Colonic mucosa (tissue), 4 donors: ENCODE measurements at regions of chr17 and their contacts with region 1.

Region 1: DNA sequence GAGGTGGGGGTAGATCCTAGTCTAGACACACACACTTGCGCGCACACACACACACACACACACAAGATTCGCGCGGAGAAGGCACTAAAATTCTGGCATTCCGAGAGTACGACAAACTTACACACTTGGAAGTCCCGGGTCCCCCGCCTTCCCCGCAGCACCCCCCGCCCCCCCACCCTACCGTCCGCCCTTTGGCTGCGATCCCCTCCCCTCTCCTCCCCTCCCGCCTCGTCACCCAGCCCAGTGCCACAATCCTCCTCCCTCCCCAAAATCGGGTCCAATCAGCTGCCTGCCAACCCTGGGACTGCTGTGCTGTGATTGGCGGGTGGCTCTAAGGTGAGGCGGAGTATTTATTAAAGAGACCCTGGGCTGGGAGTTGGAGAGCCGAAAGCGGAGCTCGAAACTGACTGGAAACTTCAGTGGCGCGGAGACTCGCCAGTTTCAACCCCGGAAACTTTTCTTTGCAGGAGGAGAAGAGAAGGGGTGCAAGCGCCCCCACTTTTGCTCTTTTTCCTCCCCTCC is at the start of gene SOX9:
- DNase-seq: peak; percentile 95
- H3K4me3 ChIP-seq: peak within 1 kb of the TSS; percentile 74
- H3K27ac ChIP-seq: peak within 1 kb of the TSS; percentile 84
- H3K4me1 ChIP-seq: no peaks in the 10 kb centered on the region
- H3K27me3 ChIP-seq: peaks cover 26% of the 10 kb centered on the region
- CTCF ChIP-seq: no peak
- total RNA-seq, gene SOX9: 52.3 to 74.2 TPM

Region 2: GRCh38 chr17:71976011-71976649 is 144.6 kb before region 1 on chr17:
- intact Hi-C with region 1: loop called (anchors 10 kb)
- DNase-seq: peak; percentile 89
- H3K4me3 ChIP-seq: no peak overlapping the region
- H3K27ac ChIP-seq: peak overlapping the region; percentile 85
- H3K4me1 ChIP-seq: no peaks in the 10 kb centered on the region
- H3K27me3 ChIP-seq: no peaks in the 10 kb centered on the region
- CTCF ChIP-seq: no peak

Region 3: GRCh38 chr17:72426948-72427760 is 306.5 kb after region 1 on chr17:
- intact Hi-C with region 1: loop called (anchors 5 kb)
- DNase-seq: peak; percentile 89
- H3K4me3 ChIP-seq: no peak overlapping the region
- H3K27ac ChIP-seq: peak overlapping the region; percentile 74
- H3K4me1 ChIP-seq: peaks cover 22% of the 10 kb centered on the region
- H3K27me3 ChIP-seq: no peaks in the 10 kb centered on the region
- CTCF ChIP-seq: no peak